CD14-positive monocyte (primary cell): ENCODE measurements at regions of chr20 and their contacts with region 1.

Region 1: GRCh38 chr20:44966030-44966961 is at the start of gene STK4:
- DNase-seq: peak; percentile 94 to 96 (median 96)
- H3K4me3 ChIP-seq: peak within 1 kb of the TSS; percentile 85 to 99 (median 93)
- H3K4me3 Mint-ChIP-seq: peak within 1 kb of the TSS; percentile 96 to 98
- H3K27ac ChIP-seq: peak within 1 kb of the TSS; percentile 80 to 94
- H3K27ac Mint-ChIP-seq: peak within 1 kb of the TSS; percentile 94 to 97 (median 96)
- H3K4me1 ChIP-seq: peaks cover 33 to 55% of the 10 kb centered on the region in 2 donors
- H3K4me1 Mint-ChIP-seq: peaks cover 54% of the 10 kb centered on the region
- H3K27me3 ChIP-seq: no peaks in the 10 kb centered on the region
- H3K27me3 Mint-ChIP-seq: peaks cover 0 to 1% (median 0%) of the 10 kb centered on the region in 3 donors
- CTCF ChIP-seq: peak; percentile 58
- polyA plus RNA-seq, gene STK4: 53.0 to 123 (median 69.9) TPM

Region 2: DNA sequence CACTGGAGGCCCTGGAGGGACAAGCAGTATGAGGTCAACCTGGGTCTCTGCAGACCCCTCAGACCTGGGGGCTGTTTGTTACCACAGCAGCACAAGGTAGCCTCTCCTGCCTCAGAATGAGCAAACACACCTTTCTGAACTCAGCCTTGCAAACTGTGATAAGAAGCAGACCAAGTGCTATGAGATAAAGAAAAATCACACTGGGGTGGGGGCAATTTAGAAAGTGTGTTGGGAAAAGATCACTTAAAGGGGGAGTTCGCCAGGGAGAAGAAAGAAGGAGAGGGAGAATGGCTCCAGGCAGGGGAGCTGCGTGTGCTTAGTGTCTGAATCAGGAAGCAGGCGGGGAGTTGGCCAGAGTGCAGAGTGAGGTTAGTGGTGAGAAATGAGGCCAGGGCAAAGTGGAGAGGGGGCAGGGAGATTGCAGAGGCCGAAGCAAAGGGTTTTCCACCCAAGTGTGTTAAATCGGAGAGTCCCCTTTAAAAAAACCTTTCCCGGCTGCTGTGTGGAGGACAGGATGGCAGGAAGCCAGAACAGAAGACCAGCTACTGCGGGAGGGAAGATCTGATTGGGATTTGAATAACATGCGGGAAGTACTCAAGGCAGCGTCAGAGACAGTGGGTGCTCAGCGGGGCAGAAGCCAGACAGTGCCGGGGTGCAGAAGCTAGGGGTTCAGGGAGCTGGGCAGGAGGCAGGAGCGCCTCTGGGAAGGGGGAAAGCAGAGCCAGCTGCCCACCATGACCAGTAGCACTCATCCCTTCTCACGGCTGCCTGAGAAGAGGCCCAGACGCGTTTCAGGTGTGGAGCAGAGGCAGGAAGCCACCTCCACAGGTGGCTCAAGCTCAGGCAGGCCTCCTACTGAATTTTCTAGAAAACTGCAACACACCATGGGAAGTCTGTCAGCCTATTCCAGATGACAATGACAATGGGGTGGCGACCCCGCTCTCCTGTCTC is 323.8 kb before region 1 on chr20:
- intact Hi-C with region 1: loop called in 1 of 2 experiments (anchors 10 kb)
- DNase-seq: peak; percentile 57 to 80 (median 66)
- H3K4me3 ChIP-seq: peak overlapping the region in 1 of 3 experiments; percentile 48
- H3K4me3 Mint-ChIP-seq: peak overlapping the region; percentile 75 to 89
- H3K27ac ChIP-seq: peak overlapping the region; percentile 47 to 71
- H3K27ac Mint-ChIP-seq: peak overlapping the region; percentile 77 to 94 (median 89)
- H3K4me1 ChIP-seq: peaks cover 62 to 64% of the 10 kb centered on the region in 2 donors
- H3K4me1 Mint-ChIP-seq: peaks cover 62% of the 10 kb centered on the region
- H3K27me3 ChIP-seq: no peaks in the 10 kb centered on the region
- H3K27me3 Mint-ChIP-seq: peaks cover 1 to 5% (median 4%) of the 10 kb centered on the region in 3 donors
- CTCF ChIP-seq: no peak

Region 3: GRCh38 chr20:44885392-44886265 is 80.7 kb before region 1 on chr20 and contains the start of gene YWHAB:
- intact Hi-C with region 1: loop called (anchors 5 kb)
- DNase-seq: peak; percentile 93 to 97 (median 96)
- H3K4me3 ChIP-seq: peak within 1 kb of the TSS; percentile 88 to 98 (median 92)
- H3K4me3 Mint-ChIP-seq: peak within 1 kb of the TSS; percentile 94 to 96
- H3K27ac ChIP-seq: peak within 1 kb of the TSS; percentile 89 to 94
- H3K27ac Mint-ChIP-seq: peak within 1 kb of the TSS; percentile 89 to 98 (median 94)
- H3K4me1 ChIP-seq: peaks cover 40 to 55% of the 10 kb centered on the region in 2 donors
- H3K4me1 Mint-ChIP-seq: peaks cover 49% of the 10 kb centered on the region
- H3K27me3 ChIP-seq: no peaks in the 10 kb centered on the region
- H3K27me3 Mint-ChIP-seq: no peaks in the 10 kb centered on the region
- CTCF ChIP-seq: peak; percentile 35
- polyA plus RNA-seq, gene YWHAB: 126 to 654 (median 504) TPM

Region 4: GRCh38 chr20:44981736-44982406 is 15.6 kb after region 1 on chr20:
- intact Hi-C with region 1: loop called in 1 of 2 experiments (anchors 2 kb)
- DNase-seq: no peak
- H3K4me3 ChIP-seq: no peak overlapping the region
- H3K4me3 Mint-ChIP-seq: no peak overlapping the region
- H3K27ac ChIP-seq: peak overlapping the region in 1 of 2 donors; percentile 62
- H3K27ac Mint-ChIP-seq: peak overlapping the region in 6 of 7 donors; percentile 30 to 85 (median 70)
- H3K4me1 ChIP-seq: peaks cover 42 to 59% of the 10 kb centered on the region in 2 donors
- H3K4me1 Mint-ChIP-seq: peaks cover 53% of the 10 kb centered on the region
- H3K27me3 ChIP-seq: no peaks in the 10 kb centered on the region
- H3K27me3 Mint-ChIP-seq: peaks cover 0 to 3% (median 1%) of the 10 kb centered on the region in 3 donors
- CTCF ChIP-seq: no peak

Region 5: GRCh38 chr20:44993343-44993742 is 27.0 kb after region 1 on chr20:
- intact Hi-C with region 1: no loop called
- DNase-seq: peak; percentile 38 to 69 (median 56)
- H3K4me3 ChIP-seq: peak overlapping the region in 1 of 3 experiments; percentile 60
- H3K4me3 Mint-ChIP-seq: peak overlapping the region; percentile 62 to 64
- H3K27ac ChIP-seq: peak overlapping the region; percentile 84
- H3K27ac Mint-ChIP-seq: peak overlapping the region; percentile 89 to 97 (median 95)
- H3K4me1 ChIP-seq: peaks cover 37 to 45% of the 10 kb centered on the region in 2 donors
- H3K4me1 Mint-ChIP-seq: peaks cover 43% of the 10 kb centered on the region
- H3K27me3 ChIP-seq: no peaks in the 10 kb centered on the region
- H3K27me3 Mint-ChIP-seq: no peaks in the 10 kb centered on the region
- CTCF ChIP-seq: no peak

Region 6: DNA sequence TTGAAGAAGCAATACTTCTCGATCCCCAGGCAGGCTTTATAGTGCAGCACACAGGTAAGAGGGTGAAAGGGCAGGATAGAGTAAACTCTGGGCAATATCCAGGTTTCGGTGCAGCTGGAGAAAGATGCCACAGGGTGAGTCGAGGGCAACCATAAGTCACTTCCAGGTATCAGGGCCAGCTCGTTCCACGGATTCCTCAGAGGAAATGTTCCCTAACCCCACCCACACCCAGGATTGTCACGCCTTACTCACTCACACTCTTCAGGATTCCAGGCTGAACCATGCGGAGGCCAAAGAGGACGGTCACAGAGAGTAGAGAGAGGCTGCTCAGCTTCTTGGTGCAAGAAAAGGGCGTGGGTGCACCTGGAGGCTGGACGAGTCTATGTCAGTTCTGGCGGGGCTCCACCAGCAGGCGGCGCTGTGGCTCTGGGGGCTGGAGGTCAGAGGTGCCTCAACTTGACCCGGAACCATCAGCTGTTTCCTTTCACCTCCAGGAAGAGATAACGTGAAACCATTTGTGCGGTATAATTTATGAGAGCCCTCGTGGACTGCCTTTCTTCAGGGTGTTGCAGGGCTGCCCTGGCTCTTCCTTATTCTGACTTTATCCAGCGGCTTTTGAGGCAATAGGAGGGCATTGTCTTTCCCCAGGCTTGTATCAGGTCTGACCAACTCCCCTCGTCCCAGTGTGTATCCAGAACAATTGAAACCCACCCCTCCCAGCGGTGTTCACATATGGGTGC is 172.4 kb after region 1 on chr20:
- intact Hi-C with region 1: no loop called
- DNase-seq: peak; percentile 32 to 65 (median 53)
- H3K4me3 ChIP-seq: no peak overlapping the region
- H3K4me3 Mint-ChIP-seq: no peak overlapping the region
- H3K27ac ChIP-seq: no peak overlapping the region
- H3K27ac Mint-ChIP-seq: no peak overlapping the region
- H3K4me1 ChIP-seq: no peaks in the 10 kb centered on the region
- H3K4me1 Mint-ChIP-seq: no peaks in the 10 kb centered on the region
- H3K27me3 ChIP-seq: peaks cover 0 to 7% of the 10 kb centered on the region in 2 donors
- H3K27me3 Mint-ChIP-seq: peaks cover 8 to 18% (median 10%) of the 10 kb centered on the region in 3 donors
- CTCF ChIP-seq: peak; percentile 86